Vagina (tissue), 2 donors: ENCODE measurements at regions of chr3 and their contacts with region 1.

Region 1: GRCh38 chr3:52056968-52057805 is 816 bp upstream of the DUSP7 start:
- DNase-seq: peak; percentile 100
- H3K4me3 ChIP-seq: peak overlapping the region; percentile 73 to 75
- H3K27ac ChIP-seq: peak overlapping the region; percentile 98
- H3K4me1 ChIP-seq: peaks cover 46% of the 10 kb centered on the region
- H3K27me3 ChIP-seq: no peaks in the 10 kb centered on the region
- CTCF ChIP-seq: no peak
- POLR2A ChIP-seq: peak in 1 of 2 donors; percentile 22

Region 2: GRCh38 chr3:52014613-52015012 is 42.6 kb before region 1 on chr3:
- intact Hi-C with region 1: loop called (anchors 5 kb)
- DNase-seq: no peak
- H3K4me3 ChIP-seq: no peak overlapping the region
- H3K27ac ChIP-seq: no peak overlapping the region
- H3K4me1 ChIP-seq: peaks cover 3% of the 10 kb centered on the region
- H3K27me3 ChIP-seq: no peaks in the 10 kb centered on the region
- CTCF ChIP-seq: no peak
- POLR2A ChIP-seq: no peak

Region 3: GRCh38 chr3:52123106-52123725 is 66.0 kb after region 1 on chr3:
- intact Hi-C with region 1: loop called (anchors 10 kb)
- DNase-seq: no peak
- H3K4me3 ChIP-seq: no peak overlapping the region
- H3K27ac ChIP-seq: peak overlapping the region; percentile 13
- H3K4me1 ChIP-seq: peaks cover 26% of the 10 kb centered on the region
- H3K27me3 ChIP-seq: no peaks in the 10 kb centered on the region
- CTCF ChIP-seq: peak; percentile 76 to 93 (median 83)
- POLR2A ChIP-seq: no peak